ENCODE measurements at regions of chr11 and their contacts with region 1.

Region 1: GRCh38 chr11:117946842-117947526 is 17.8 kb upstream of the TMPRSS13 start:
- DNase-seq: peak; percentile 75 to 84 (median 79)
- H3K4me3 ChIP-seq: no peak overlapping the region
- H3K27ac ChIP-seq: no peak overlapping the region
- H3K4me1 ChIP-seq: peaks cover 20 to 47% (median 42%) of the 10 kb centered on the region in 4 experiments
- H3K27me3 ChIP-seq: no peaks in the 10 kb centered on the region

Region 2: GRCh38 chr11:117817368-117818040 is 129.5 kb before region 1 on chr11:
- CTCF ChIA-PET with region 1: interaction called, 85 read pairs
- POLR2A ChIA-PET with region 1: no interaction called
- DNase-seq: peak; percentile 66 to 82 (median 77)
- H3K4me3 ChIP-seq: no peak overlapping the region
- H3K27ac ChIP-seq: no peak overlapping the region
- H3K4me1 ChIP-seq: peaks cover 4 to 71% (median 49%) of the 10 kb centered on the region in 4 experiments
- H3K27me3 ChIP-seq: no peaks in the 10 kb centered on the region

Region 3: DNA sequence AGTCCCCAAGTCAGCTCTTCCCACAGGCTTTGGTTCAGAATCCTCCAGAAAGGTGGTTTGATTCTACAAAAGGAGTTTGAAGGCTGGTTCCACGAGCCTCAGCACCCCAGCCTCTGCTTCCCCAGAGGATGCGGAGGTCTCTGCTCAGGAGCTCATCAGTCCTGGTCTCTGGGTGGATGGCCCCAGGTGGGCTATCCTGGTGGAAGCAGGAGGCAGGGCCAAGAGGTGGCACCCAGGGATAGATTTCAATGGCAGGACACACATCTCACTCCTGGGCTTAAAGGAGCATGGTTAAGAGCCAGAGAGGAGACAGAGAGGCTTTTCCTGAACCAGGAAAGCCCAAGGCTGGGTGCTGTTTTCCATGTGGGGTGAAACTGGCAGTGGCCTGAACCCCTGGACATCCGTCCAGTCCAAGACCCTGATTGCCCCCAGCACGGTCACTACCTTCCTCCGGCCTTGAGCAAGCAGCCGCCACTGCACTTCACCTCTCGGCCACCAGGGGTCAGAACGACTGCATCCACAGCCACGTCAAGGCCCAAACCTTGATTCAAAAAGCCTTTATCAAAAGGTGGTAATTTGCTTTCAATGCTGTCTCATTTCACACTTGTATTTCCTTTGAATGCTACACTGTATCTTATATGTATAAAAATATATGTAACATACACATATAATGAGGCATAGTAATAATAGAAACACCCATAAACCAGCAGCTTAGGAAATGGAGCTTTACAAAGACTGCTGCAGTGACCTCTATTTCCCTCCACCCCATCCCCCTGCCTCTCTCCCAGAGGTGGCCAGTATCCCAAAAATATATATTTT is 103.1 kb before region 1 on chr11:
- CTCF ChIA-PET with region 1: interaction called, 122 read pairs
- POLR2A ChIA-PET with region 1: interaction called, 3 read pairs
- DNase-seq: peak; percentile 59 to 80 (median 73)
- H3K4me3 ChIP-seq: no peak overlapping the region
- H3K27ac ChIP-seq: no peak overlapping the region
- H3K4me1 ChIP-seq: peaks cover 0 to 18% (median 14%) of the 10 kb centered on the region in 4 experiments
- H3K27me3 ChIP-seq: no peaks in the 10 kb centered on the region

Region 4: GRCh38 chr11:117919781-117920221 is 27.2 kb before region 1 on chr11:
- CTCF ChIA-PET with region 1: interaction called, 23 read pairs
- POLR2A ChIA-PET with region 1: no interaction called
- DNase-seq: no peak
- H3K4me3 ChIP-seq: no peak overlapping the region
- H3K27ac ChIP-seq: no peak overlapping the region
- H3K4me1 ChIP-seq: peaks cover 0 to 16% (median 5%) of the 10 kb centered on the region in 4 experiments
- H3K27me3 ChIP-seq: no peaks in the 10 kb centered on the region

Region 5: GRCh38 chr11:118002541-118003423 is 55.8 kb after region 1 on chr11:
- CTCF ChIA-PET with region 1: interaction called, 24 read pairs
- POLR2A ChIA-PET with region 1: no interaction called
- DNase-seq: peak in 2 of 3 donors; percentile 50 to 70
- H3K4me3 ChIP-seq: peak overlapping the region in 1 of 7 experiments; percentile 36
- H3K27ac ChIP-seq: peak overlapping the region in 1 of 2 experiments; percentile 70
- H3K4me1 ChIP-seq: peaks cover 5 to 52% (median 36%) of the 10 kb centered on the region in 4 experiments
- H3K27me3 ChIP-seq: no peaks in the 10 kb centered on the region

Region 6: DNA sequence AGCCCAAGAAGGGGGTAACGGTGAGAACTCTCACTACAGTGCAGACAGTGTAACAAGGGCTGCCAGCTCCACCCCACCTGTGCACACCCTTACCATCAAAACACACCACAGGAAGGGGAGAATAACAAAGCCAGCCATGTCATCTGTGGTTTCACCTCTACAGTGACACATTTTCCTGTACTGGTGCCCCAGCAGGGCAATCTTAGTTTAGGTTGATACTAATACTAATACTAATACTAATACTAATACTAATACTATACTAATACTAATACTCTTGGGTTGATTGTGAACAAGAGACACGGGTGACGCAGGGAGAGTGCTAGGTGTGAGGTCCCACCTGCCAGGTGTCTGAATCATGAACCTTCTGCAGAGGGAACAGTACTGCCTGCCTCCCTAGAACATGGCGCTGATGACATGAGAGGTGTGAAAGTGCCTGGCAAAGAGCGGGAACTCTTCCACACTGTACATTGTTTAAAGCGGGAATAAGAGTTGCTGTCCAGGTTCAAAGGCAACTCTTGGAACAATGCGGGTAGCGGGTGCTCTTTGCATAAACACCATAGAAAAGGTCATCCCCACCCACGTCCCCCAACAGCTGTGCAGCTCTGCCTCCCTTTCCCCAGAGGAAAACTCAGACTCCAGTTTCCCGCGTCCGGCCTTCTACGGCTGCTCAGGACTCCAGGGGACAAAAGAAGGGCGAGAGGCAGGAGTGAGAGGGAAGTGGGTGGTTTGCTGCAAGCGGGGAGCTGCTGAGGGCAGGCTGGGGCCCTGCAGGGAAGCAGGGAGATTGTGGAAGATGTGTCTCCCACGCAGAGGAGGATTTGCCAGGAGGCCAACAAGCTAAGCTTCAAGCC is 104.9 kb after region 1 on chr11:
- CTCF ChIA-PET with region 1: interaction called, 229 read pairs
- POLR2A ChIA-PET with region 1: interaction called, 3 read pairs
- DNase-seq: peak in 2 of 3 donors; percentile 35 to 43
- H3K4me3 ChIP-seq: no peak overlapping the region
- H3K27ac ChIP-seq: no peak overlapping the region
- H3K4me1 ChIP-seq: peaks cover 0 to 28% (median 6%) of the 10 kb centered on the region in 4 experiments
- H3K27me3 ChIP-seq: no peaks in the 10 kb centered on the region

Measured in common myeloid progenitor, CD34-positive (primary cell).